Upper lobe of right lung (tissue), 1 donor: ENCODE measurements at regions of chr12 and their contacts with region 1.

Region 1: GRCh38 chr12:108803428-108804105 is 53.8 kb downstream of the SSH1 start:
- DNase-seq: no peak
- ATAC-seq: peak; percentile 92
- H3K4me3 ChIP-seq: no peak overlapping the region
- H3K27ac ChIP-seq: peak overlapping the region; percentile 77
- H3K4me1 ChIP-seq: peaks cover 33% of the 10 kb centered on the region
- H3K27me3 ChIP-seq: no peaks in the 10 kb centered on the region
- CTCF ChIP-seq: peak; percentile 96

Region 2: DNA sequence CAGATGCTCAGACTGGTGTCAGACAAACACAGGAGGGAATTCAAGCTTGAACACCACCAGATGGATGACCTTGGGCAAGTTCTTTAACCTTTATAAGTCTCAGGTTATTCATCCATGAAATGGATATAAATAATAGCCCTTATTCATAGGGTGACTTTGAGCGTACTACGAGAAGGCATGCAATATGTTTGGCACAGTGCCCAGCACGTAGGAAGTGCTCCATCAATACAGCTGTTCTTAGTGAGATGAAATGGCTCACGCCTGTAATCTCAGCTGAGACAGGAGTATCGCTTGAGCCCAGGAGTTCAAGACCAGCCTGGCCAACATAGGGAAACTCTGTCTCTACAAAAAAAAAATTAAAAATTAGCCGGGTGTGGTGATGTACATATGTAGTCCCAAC is 373.3 kb before region 1 on chr12:
- intact Hi-C with region 1: no loop called
- DNase-seq: no peak
- ATAC-seq: no peak
- H3K4me3 ChIP-seq: no peak overlapping the region
- H3K27ac ChIP-seq: no peak overlapping the region
- H3K4me1 ChIP-seq: no peaks in the 10 kb centered on the region
- H3K27me3 ChIP-seq: no peaks in the 10 kb centered on the region
- CTCF ChIP-seq: no peak

Region 3: DNA sequence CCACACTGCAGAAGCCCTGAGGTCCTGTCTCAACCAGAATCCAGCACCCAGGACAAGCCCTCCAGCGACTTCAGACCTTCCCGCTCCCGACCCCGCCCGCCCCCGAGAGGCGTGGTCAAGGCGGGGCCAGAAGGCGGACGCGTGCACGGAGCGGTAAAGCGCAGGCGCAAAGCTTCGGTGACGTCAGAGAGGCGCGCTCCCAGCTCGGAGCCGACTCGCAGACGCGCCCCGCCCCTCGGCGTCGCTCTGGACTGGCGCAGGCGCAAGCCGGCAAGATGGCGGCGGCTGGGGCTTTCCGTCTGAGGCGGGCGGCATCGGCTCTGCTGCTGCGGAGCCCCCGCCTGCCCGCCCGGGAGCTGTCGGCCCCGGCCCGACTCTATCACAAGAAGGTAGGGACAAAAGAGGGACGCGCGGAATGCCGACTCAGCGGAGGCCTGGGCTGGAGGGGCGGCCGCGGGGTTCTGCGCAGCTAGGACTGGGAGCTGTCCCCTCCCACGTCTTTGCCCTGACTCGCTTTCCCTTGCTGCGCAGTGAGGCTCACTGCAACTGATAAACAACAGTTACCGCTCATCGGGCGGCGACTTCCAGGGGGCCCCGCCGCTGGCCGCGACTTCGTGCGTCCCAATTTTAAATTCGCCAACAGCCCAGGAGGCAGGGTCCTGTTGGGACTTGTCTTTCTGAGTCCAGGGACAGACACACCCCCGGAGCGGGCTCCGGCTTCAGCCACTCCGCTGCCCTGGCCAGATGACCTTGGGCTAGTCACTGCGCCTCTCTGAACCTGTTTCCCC is 241.0 kb before region 1 on chr12 and contains the start of gene ISCU:
- intact Hi-C with region 1: loop called (anchors 10 kb)
- DNase-seq: peak; percentile 99
- ATAC-seq: peak; percentile 94
- H3K4me3 ChIP-seq: peak within 1 kb of the TSS; percentile 90
- H3K27ac ChIP-seq: peak within 1 kb of the TSS; percentile 94
- H3K4me1 ChIP-seq: peaks cover 49% of the 10 kb centered on the region
- H3K27me3 ChIP-seq: no peaks in the 10 kb centered on the region
- CTCF ChIP-seq: no peak
- total RNA-seq, gene ISCU: 138 TPM

Region 4: DNA sequence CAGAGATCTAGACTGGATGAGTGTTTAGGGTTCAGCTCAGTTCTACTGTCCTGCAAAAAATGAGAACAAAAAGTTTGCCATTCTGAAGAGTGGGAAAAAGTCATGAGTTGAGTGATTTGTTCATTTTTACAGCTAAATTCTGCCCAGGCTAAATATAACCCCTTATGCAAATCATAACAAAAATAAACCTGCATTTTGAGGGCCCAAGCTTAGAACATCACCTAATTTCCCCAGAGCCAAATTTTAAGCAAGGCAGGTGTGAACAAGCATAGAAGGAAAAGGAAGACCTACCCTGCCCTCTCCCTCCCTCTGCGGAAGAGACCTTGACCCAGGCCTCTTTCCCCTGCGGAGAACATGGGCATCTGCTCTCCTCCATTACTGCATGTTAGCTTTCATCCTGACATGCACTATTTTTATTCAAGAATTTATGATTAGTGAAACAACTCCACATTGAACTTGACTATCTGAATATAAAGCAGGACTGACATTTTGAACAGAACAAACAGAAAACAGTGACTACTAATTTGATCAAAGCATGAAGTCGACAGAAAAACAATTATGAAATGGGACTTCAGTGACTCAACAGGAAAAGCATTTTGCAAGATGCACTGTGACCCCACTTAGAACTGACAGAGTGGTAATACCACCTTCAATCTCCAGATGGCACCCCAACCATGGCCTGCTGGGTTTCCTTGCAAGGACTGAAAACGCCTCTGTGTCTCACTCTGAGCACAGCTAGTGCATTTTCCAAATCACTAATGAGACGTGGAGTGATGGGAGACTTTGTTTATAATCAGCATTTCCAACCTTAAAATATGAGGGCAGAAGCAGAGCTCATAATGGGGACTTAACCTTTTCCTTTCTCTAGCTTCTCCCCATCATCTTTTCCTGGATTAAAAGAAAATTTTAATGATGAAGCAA is 139.0 kb before region 1 on chr12:
- intact Hi-C with region 1: loop called (anchors 5 kb)
- DNase-seq: peak; percentile 77
- ATAC-seq: peak; percentile 98
- H3K4me3 ChIP-seq: no peak overlapping the region
- H3K27ac ChIP-seq: peak overlapping the region; percentile 83
- H3K4me1 ChIP-seq: peaks cover 53% of the 10 kb centered on the region
- H3K27me3 ChIP-seq: no peaks in the 10 kb centered on the region
- CTCF ChIP-seq: peak; percentile 92

Region 5: DNA sequence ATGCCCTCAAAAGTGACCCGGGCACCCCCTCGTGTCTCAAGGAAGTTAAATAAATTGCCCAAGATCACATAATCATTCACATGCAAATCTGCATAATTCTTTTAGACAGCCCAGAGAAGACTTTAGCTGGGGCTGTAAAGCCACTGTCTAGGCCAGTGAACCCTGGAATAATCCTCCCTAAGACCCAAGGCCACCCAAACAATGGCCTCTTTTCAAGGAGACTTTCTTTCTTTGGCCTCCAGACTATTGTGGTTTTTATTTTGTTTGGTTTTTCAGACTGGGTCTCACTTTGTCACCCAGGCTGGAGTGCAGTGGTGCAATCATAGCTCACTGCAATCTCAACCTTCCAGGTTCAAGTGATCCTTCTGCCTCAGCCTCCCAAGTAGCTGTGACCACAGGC is 206.7 kb after region 1 on chr12:
- intact Hi-C with region 1: no loop called
- DNase-seq: no peak
- ATAC-seq: no peak
- H3K4me3 ChIP-seq: no peak overlapping the region
- H3K27ac ChIP-seq: no peak overlapping the region
- H3K4me1 ChIP-seq: no peaks in the 10 kb centered on the region
- H3K27me3 ChIP-seq: no peaks in the 10 kb centered on the region
- CTCF ChIP-seq: no peak